H1 (cell line): ENCODE measurements at regions of chr14 and their contacts with region 1.

Region 1: GRCh38 chr14:100645192-100645990 is 58.2 kb upstream of the BEGAIN start:
- DNase-seq: peak; percentile 54 to 97
- H3K4me3 ChIP-seq: peak overlapping the region in 2 of 4 experiments; percentile 11 to 40; a peak in 4 of 8 replicates
- H3K27ac ChIP-seq: no peak overlapping the region
- H3K4me1 ChIP-seq: peaks cover 0 to 7% (median 6%) of the 10 kb centered on the region in 4 experiments; a peak in 5 of 7 replicates
- H3K27me3 ChIP-seq: no peaks in the 10 kb centered on the region; a peak in 1 of 7 replicates
- CTCF ChIP-seq: peak; percentile 80 to 93 (median 85)
- EP300 ChIP-seq: no peak; a peak in 1 of 3 replicates
- POLR2A ChIP-seq: no peak
- RAD21 ChIP-seq: peak; percentile 89 to 94

Region 2: DNA sequence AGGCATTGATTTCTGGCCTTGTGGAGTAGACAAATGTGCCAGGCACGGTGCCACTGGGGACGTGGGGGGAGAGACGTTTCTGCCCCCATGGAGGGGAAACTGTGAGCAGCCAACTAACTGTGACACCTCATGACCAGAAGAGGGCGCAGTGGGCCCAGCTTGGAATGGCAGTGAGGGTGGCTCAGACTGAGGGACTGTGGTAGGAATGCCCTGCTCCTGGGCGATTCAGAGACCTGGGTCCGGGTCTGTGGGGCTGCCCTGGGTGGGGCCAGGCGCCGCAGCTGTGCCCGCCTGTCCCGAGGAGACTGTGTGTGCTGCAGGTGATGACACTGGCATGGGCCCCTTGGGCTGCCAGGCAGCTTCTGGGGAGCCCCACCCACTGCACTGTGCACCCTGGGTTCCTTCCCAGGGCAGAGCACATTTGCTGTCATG is 261.6 kb before region 1 on chr14:
- CTCF ChIA-PET with region 1: interaction called, 109 read pairs
- POLR2A ChIA-PET with region 1: no interaction called
- DNase-seq: peak in 1 of 2 experiments; percentile 87
- H3K4me3 ChIP-seq: no peak overlapping the region
- H3K27ac ChIP-seq: no peak overlapping the region
- H3K4me1 ChIP-seq: peaks cover 0 to 9% (median 0%) of the 10 kb centered on the region in 4 experiments; a peak in 3 of 7 replicates
- H3K27me3 ChIP-seq: no peaks in the 10 kb centered on the region
- CTCF ChIP-seq: peak; percentile 93 to 97 (median 97)
- EP300 ChIP-seq: no peak
- POLR2A ChIP-seq: no peak
- RAD21 ChIP-seq: peak; percentile 88 to 89

Region 3: GRCh38 chr14:100417466-100417865 is 227.9 kb before region 1 on chr14:
- CTCF ChIA-PET with region 1: interaction called, 24 read pairs
- POLR2A ChIA-PET with region 1: no interaction called
- DNase-seq: peak; percentile 58 to 78
- H3K4me3 ChIP-seq: no peak overlapping the region
- H3K27ac ChIP-seq: no peak overlapping the region
- H3K4me1 ChIP-seq: peaks cover 0 to 9% (median 3%) of the 10 kb centered on the region in 4 experiments; a peak in 5 of 7 replicates
- H3K27me3 ChIP-seq: no peaks in the 10 kb centered on the region
- CTCF ChIP-seq: peak; percentile 83 to 98 (median 84)
- EP300 ChIP-seq: no peak
- POLR2A ChIP-seq: no peak
- RAD21 ChIP-seq: peak; percentile 90 to 92

Region 4: DNA sequence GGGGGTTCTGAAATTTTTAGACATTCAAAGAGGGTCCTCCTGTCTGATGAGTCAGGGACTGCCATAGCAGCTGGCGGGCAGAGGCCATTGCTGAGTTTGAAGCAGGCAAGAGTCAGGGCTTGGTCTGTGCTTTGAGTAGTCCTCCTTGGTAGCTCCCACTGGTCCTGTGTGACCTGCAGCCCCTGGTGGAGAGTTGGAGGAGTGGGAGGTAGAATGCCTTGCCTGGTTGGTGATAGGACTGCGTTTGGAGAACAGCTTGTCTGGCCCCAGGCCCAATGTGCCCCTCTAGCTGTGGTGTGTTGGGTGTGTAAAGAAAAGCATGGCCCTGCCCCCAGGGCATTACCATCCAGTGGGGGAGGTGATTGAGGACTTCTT is 174.9 kb before region 1 on chr14:
- CTCF ChIA-PET with region 1: interaction called, 13 read pairs
- POLR2A ChIA-PET with region 1: no interaction called
- DNase-seq: no peak
- H3K4me3 ChIP-seq: no peak overlapping the region
- H3K27ac ChIP-seq: no peak overlapping the region
- H3K4me1 ChIP-seq: peaks cover 3 to 10% (median 6%) of the 10 kb centered on the region in 4 experiments
- H3K27me3 ChIP-seq: no peaks in the 10 kb centered on the region
- CTCF ChIP-seq: peak in 1 of 3 experiments; percentile 28; a peak in 2 of 4 replicates
- EP300 ChIP-seq: no peak
- POLR2A ChIP-seq: no peak
- RAD21 ChIP-seq: peak; percentile 10 to 21; a peak in 2 of 4 replicates

Region 5: GRCh38 chr14:100540141-100540925 is 105.1 kb before region 1 on chr14:
- CTCF ChIA-PET with region 1: interaction called, 61 read pairs
- POLR2A ChIA-PET with region 1: no interaction called
- DNase-seq: peak in 1 of 2 experiments; percentile 17
- H3K4me3 ChIP-seq: no peak overlapping the region
- H3K27ac ChIP-seq: no peak overlapping the region
- H3K4me1 ChIP-seq: peaks cover 1 to 5% (median 3%) of the 10 kb centered on the region in 4 experiments; a peak in 3 of 7 replicates
- H3K27me3 ChIP-seq: no peaks in the 10 kb centered on the region; a peak in 1 of 7 replicates
- CTCF ChIP-seq: peak in 2 of 3 experiments; percentile 73 to 78; a peak in 3 of 4 replicates
- EP300 ChIP-seq: no peak
- POLR2A ChIP-seq: no peak
- RAD21 ChIP-seq: peak; percentile 37 to 47

Region 6: GRCh38 chr14:100617410-100618317 is 27.7 kb before region 1 on chr14:
- CTCF ChIA-PET with region 1: interaction called, 13 read pairs
- POLR2A ChIA-PET with region 1: interaction called, 3 read pairs
- DNase-seq: no peak
- H3K4me3 ChIP-seq: no peak overlapping the region
- H3K27ac ChIP-seq: no peak overlapping the region
- H3K4me1 ChIP-seq: no peaks in the 10 kb centered on the region; a peak in 1 of 7 replicates
- H3K27me3 ChIP-seq: peaks cover 0 to 6% (median 0%) of the 10 kb centered on the region in 4 experiments; a peak in 2 of 7 replicates
- CTCF ChIP-seq: no peak
- EP300 ChIP-seq: no peak
- POLR2A ChIP-seq: no peak
- RAD21 ChIP-seq: no peak

Region 7: GRCh38 chr14:100750762-100751699 is 105.6 kb after region 1 on chr14:
- CTCF ChIA-PET with region 1: no interaction called
- POLR2A ChIA-PET with region 1: no interaction called
- DNase-seq: no peak
- H3K4me3 ChIP-seq: no peak overlapping the region
- H3K27ac ChIP-seq: no peak overlapping the region
- H3K4me1 ChIP-seq: no peaks in the 10 kb centered on the region
- H3K27me3 ChIP-seq: no peaks in the 10 kb centered on the region
- CTCF ChIP-seq: no peak
- EP300 ChIP-seq: no peak
- POLR2A ChIP-seq: no peak
- RAD21 ChIP-seq: no peak

Region 8: GRCh38 chr14:100761481-100761880 is 116.1 kb after region 1 on chr14:
- CTCF ChIA-PET with region 1: no interaction called
- POLR2A ChIA-PET with region 1: no interaction called
- DNase-seq: no peak
- H3K4me3 ChIP-seq: no peak overlapping the region
- H3K27ac ChIP-seq: no peak overlapping the region
- H3K4me1 ChIP-seq: peaks cover 0 to 5% (median 1%) of the 10 kb centered on the region in 4 experiments; a peak in 3 of 7 replicates
- H3K27me3 ChIP-seq: no peaks in the 10 kb centered on the region
- CTCF ChIP-seq: no peak
- EP300 ChIP-seq: no peak
- POLR2A ChIP-seq: no peak
- RAD21 ChIP-seq: no peak